Caco-2 (cell line): ENCODE measurements at regions of chr11 and their contacts with region 1.

Region 1: DNA sequence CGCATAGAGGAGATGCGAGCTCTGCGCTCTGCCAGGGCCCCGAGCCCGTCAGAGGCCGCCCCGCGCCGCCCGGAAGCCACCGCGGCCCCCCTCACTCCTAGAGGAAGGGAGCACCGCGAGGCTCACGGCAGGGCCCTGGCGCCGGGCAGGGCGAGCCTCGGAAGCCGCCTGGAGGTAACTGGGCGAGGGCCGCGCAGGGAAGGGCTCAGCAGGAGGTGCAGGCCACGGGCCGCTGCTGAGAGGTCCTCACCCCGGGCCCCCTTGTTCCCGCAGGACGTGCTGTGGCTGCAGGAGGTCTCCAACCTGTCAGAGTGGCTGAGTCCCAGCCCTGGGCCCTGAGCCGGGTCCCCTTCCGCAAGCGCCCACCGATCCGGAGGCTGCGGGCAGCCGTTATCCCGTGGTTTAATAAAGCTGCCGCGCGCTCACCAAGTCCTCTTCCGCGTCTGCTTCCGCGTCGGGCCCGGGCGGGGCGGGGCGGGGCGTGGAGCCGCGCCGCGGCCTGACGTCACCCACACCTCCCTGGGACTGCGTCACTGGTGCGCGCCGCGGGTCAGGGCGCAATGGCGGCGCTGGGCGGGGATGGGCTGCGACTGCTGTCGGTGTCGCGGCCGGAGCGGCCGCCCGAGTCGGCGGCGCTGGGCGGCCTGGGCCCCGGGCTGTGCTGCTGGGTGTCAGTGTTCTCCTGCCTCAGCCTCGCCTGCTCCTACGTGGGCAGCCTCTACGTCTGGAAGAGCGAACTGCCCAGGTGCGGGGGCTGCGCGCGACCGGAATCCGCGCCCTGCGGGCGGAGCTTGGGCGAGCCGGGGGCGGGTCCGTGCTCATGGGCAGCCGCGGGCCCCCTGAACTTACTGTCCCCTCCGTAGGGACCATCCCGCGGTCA is at the start of gene RCE1:
- DNase-seq: peak; percentile 94 to 98
- H3K4me3 ChIP-seq: peak within 1 kb of the TSS; percentile 89
- H3K4me3 Mint-ChIP-seq: peak within 1 kb of the TSS; percentile 83
- H3K27ac Mint-ChIP-seq: peak within 1 kb of the TSS; percentile 85
- H3K4me1 ChIP-seq: peaks cover 6% of the 10 kb centered on the region
- H3K4me1 Mint-ChIP-seq: peaks cover 13% of the 10 kb centered on the region
- H3K27me3 ChIP-seq: no peaks in the 10 kb centered on the region
- H3K27me3 Mint-ChIP-seq: no peaks in the 10 kb centered on the region
- CTCF ChIP-seq: no peak
- total RNA-seq, gene RCE1: 57.6 and 60.7 TPM in 2 replicates

Region 2: DNA sequence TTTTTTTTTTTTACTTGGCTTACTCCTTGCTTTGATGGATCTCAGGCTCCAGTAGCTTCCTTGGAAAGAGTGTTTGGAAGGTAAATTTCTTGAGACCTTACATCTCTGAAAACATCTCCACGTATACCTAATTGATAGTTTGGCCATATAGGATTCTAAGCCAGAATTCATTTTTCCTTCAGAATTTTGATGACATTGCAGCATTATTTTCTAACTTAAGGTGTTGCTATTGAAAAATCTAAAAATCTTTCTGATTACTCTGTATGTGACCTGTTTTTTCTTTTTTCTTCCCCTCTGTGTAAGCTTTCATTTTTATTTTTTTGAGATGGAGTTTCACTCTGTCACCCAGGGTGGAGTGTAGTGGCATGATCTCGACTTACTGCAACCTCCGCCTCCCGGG is 91.0 kb before region 1 on chr11:
- CTCF ChIA-PET with region 1: no interaction called
- POLR2A ChIA-PET with region 1: no interaction called
- intact Hi-C with region 1: no loop called
- DNase-seq: no peak
- H3K4me3 ChIP-seq: no peak overlapping the region
- H3K4me3 Mint-ChIP-seq: no peak overlapping the region
- H3K27ac Mint-ChIP-seq: no peak overlapping the region
- H3K4me1 ChIP-seq: 0 out of 2 replicates have a peak, but pooled peaks cover 4% of the 10 kb centered on the region
- H3K4me1 Mint-ChIP-seq: peaks cover 20% of the 10 kb centered on the region
- H3K27me3 ChIP-seq: no peaks in the 10 kb centered on the region
- H3K27me3 Mint-ChIP-seq: no peaks in the 10 kb centered on the region
- CTCF ChIP-seq: no peak

Region 3: DNA sequence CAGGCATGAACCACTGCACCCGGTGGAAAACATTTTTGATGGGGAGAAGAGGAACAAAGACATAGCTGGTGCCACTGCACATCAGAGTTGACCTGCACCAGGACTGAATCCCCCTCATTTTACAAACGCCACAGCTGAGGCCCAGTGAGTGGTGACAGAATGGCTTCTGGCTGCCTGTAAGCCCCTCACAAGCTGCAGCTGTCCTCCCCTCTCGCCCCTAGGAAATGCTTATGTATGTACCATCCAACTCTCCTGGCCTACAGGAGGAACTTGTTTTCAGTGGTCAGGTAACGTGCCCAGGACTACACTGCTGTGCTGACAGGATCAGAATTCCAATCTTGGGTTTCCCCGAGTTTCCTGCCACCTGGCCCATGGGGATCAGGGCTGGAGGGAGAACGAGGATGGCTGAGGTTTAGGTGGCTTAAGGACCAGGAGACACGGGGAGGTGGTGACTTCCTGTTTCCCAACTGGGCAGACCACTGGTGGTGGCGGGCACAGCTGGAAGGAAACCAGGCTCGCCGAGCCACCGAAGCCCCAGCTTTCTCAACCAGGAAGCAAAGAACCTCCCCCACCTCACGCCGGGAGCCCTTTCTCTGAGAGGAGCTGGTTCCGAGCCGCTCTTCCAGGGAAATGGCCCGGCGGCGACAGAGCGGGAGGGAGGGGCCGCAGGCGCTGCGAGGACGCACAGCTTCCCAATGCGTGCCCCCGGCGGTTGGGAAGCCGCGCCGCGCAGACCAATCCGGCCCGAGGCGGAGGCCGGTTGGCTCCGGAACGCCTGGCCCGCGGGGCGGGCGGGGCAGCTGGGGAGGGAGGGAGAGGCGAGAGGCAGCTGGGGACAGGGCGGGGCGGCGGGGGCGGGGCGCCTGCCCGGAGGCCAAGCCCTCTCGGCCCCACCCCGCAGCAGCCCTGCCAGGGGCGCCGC is 12.7 kb after region 1 on chr11:
- CTCF ChIA-PET with region 1: interaction called, 8 read pairs
- POLR2A ChIA-PET with region 1: interaction called, 45 read pairs
- intact Hi-C with region 1: loop called (anchors 1 kb)
- DNase-seq: peak; percentile 98 to 99
- H3K4me3 ChIP-seq: peak overlapping the region; percentile 94
- H3K4me3 Mint-ChIP-seq: peak overlapping the region; percentile 96
- H3K27ac Mint-ChIP-seq: peak overlapping the region; percentile 95
- H3K4me1 ChIP-seq: peaks cover 9% of the 10 kb centered on the region
- H3K4me1 Mint-ChIP-seq: peaks cover 8% of the 10 kb centered on the region
- H3K27me3 ChIP-seq: no peaks in the 10 kb centered on the region
- H3K27me3 Mint-ChIP-seq: no peaks in the 10 kb centered on the region
- CTCF ChIP-seq: no peak

Region 4: DNA sequence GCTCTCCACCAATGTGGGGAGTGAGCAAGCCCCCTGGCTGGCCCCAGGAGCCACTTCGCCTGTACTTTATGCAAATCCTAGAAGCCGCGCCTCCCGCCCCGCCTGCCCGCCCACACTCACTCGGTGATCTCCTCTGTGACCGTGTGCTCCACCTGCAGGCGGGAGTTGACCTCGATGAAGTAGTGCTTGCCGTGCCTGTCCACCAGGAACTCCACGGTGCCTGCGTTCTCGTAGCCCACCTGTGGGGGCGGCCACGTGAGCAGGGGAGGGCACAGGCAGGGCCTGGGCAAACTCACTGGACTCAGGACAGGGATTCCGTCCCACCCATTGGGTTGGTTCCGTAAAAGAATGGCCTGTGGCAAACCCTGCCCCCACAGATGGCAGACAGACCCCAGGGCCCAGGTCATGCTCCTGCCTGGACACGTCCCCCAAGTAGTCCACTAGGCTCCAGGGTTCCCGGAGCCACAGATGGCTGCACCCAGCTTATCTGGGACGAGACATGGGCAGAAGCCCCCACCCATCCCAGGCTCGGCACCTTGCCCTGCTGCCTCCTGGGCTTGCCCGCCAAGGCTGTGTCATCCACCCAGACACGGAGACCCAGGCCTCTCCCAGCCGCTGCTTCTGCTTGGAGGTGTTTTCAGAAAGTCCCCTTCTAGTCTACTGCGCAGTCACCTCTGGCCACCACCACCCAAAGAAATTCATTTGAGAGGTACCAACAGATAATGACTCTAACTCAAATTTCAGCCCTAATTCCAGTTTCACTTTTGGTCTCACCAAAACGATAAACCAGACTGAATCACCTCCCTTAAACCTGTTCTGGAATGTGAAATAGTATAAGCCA is 25.8 kb after region 1 on chr11:
- CTCF ChIA-PET with region 1: interaction called, 3 read pairs
- POLR2A ChIA-PET with region 1: no interaction called
- intact Hi-C with region 1: loop called (anchors 1 kb)
- DNase-seq: peak; percentile 93 to 94
- H3K4me3 ChIP-seq: no peak overlapping the region
- H3K4me3 Mint-ChIP-seq: no peak overlapping the region
- H3K27ac Mint-ChIP-seq: no peak overlapping the region
- H3K4me1 ChIP-seq: peaks cover 4% of the 10 kb centered on the region; the same call in 1 of the 2 replicates
- H3K4me1 Mint-ChIP-seq: no peaks in the 10 kb centered on the region
- H3K27me3 ChIP-seq: no peaks in the 10 kb centered on the region
- H3K27me3 Mint-ChIP-seq: no peaks in the 10 kb centered on the region
- CTCF ChIP-seq: peak; percentile 88 to 94

Region 5: DNA sequence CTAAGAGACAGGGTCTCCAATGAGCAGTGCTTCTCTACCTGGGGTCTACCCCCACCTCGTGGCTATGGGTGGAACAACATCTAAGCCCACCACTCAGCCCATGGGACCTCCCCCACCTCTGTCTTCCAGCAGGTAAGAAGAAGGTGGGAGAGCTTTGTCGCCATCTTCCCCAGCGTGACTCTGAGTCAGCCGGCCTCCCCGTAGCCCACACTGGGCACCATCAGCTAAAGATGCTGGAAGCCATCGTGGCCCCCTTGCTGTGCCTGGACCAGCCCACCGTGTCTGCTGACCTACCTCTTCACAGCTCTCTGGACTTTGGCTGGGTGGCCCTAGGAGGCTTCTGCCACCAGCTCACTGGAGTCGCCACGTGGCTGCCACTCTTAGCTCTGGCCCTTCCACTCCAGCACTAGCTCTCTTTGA is 132.9 kb after region 1 on chr11:
- CTCF ChIA-PET with region 1: interaction called, 4 read pairs
- POLR2A ChIA-PET with region 1: no interaction called
- intact Hi-C with region 1: loop called (anchors 2 kb)
- DNase-seq: peak; percentile 70 to 84
- H3K4me3 ChIP-seq: no peak overlapping the region
- H3K4me3 Mint-ChIP-seq: no peak overlapping the region
- H3K27ac Mint-ChIP-seq: no peak overlapping the region
- H3K4me1 ChIP-seq: peaks cover 8% of the 10 kb centered on the region
- H3K4me1 Mint-ChIP-seq: no peaks in the 10 kb centered on the region
- H3K27me3 ChIP-seq: no peaks in the 10 kb centered on the region
- H3K27me3 Mint-ChIP-seq: no peaks in the 10 kb centered on the region
- CTCF ChIP-seq: peak; percentile 93 to 95

Region 6: GRCh38 chr11:68051191-68052144 is 1208.3 kb after region 1 on chr11:
- CTCF ChIA-PET with region 1: no interaction called
- POLR2A ChIA-PET with region 1: no interaction called
- intact Hi-C with region 1: no loop called
- DNase-seq: peak in 1 of 2 experiments; percentile 43
- H3K4me3 ChIP-seq: no peak overlapping the region
- H3K4me3 Mint-ChIP-seq: no peak overlapping the region
- H3K27ac Mint-ChIP-seq: peak overlapping the region; percentile 14
- H3K4me1 ChIP-seq: no peaks in the 10 kb centered on the region
- H3K4me1 Mint-ChIP-seq: no peaks in the 10 kb centered on the region
- H3K27me3 ChIP-seq: no peaks in the 10 kb centered on the region
- H3K27me3 Mint-ChIP-seq: no peaks in the 10 kb centered on the region
- CTCF ChIP-seq: no peak